AG04449 (cell line): ENCODE measurements at regions of chr9 and their contacts with region 1.

Region 1: GRCh38 chr9:127664667-127665507 is 41.9 kb upstream of the CFAP157 start:
- DNase-seq: peak; percentile 26
- H3K4me3 ChIP-seq: no peak overlapping the region
- CTCF ChIP-seq: no peak

Region 2: GRCh38 chr9:127654619-127655018 is 10.3 kb before region 1 on chr9:
- CTCF ChIA-PET with region 1: interaction called, 12 read pairs
- POLR2A ChIA-PET with region 1: no interaction called
- DNase-seq: peak; percentile 62
- H3K4me3 ChIP-seq: no peak overlapping the region
- CTCF ChIP-seq: no peak